Dendritic cell treated with granulocyte-macrophage colony-stimulating factor and Interleukin-4, amounts not matched to agents 40 ng/mL and 50 ng/mL, for 4 days (primary cell): ENCODE measurements at regions of chr9 and their contacts with region 1.

Region 1: DNA sequence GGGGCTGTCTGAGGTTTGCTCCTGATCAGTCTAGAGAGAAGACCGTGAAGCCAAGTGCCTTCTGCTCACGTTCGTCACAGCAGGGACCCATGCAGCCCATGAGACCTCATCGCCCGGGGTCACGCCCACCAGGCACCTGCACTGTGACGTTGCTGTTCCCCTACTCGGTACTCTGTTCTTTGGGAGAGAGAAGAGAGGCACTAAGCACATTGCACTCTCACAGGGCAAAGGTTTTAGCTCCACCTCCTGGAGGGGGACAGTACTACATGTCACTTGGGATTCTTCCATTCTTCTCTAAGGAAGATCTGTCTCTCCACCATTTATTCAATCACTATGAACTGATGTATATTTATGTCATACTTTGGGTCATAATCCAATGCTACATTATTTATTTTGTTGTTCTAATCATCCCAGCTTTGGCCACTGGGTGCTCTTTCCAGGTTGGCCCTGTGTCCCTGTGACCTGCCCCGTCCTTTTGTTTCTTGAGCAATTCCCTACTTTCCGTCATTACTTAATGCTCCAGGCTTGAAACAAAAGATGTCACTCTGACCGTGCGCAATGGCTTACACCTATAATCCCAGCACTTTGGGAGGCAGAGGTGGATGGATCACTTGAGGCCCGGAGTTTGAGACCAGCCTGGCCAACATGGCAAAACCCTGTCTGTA is 31.4 kb upstream of the BRD3 start:
- H3K4me3 Mint-ChIP-seq: no peak overlapping the region
- H3K27ac Mint-ChIP-seq: no peak overlapping the region
- H3K4me1 Mint-ChIP-seq: peaks cover 11% of the 10 kb centered on the region
- H3K27me3 Mint-ChIP-seq: peaks cover 33% of the 10 kb centered on the region

Region 2: DNA sequence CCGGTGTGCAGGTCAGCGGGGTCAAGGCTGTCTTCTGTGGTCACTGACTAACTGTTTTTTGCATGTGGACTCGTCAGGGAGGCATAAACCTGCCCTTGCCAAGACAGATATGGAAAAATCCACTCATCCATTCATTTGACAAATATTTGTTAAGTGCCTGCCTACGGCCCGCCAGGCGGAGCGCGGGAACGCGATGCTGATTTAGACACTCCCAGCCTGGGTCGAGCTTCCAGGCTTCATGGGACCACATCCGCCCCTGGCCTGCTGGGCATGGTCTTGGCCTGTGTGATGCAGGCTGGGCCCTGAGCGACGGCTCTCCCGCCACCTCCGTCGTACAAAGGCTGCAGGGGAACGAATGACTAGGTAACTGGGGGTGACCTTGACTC is 592.6 kb before region 1 on chr9:
- intact Hi-C with region 1: no loop called
- H3K4me3 Mint-ChIP-seq: no peak overlapping the region
- H3K27ac Mint-ChIP-seq: no peak overlapping the region
- H3K4me1 Mint-ChIP-seq: peaks cover 4% of the 10 kb centered on the region
- H3K27me3 Mint-ChIP-seq: peaks cover 26% of the 10 kb centered on the region

Region 3: DNA sequence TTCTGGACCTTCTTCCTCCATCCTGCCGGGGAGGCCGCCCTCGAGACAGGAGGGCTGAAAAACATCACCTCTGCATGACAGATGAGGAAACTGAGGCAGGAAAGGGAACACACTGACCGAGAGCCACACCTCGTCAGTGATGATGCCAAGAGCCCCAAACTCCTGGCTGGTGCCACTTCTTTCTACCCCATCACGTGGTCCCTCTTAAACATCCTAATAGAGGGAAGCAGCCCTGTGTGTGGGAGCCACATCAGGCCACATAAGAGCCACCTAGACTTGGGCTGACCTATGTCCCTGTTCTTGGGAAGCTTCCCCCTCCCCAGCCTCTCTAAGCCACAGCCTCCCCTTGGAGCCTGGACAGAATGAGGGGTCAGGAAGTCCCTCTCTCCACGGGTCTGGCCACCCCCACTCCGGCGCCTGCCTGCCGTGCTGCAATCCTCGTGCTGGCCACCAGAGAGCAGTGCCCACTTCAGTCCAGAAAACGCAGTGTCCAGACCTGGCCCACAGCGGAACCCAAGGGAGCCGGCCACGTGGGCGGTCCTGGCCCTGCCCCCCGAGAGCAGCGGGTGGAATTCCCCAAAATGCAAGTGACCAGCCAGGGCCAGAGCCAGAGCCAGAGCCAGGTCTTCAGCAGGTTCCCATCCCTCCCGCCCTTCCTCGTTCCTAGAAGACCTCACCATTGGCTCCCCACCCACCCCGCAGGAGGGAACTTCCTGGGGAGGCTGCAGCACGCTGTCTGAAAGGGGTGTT is 306.4 kb before region 1 on chr9:
- intact Hi-C with region 1: loop called (anchors 2 kb)
- H3K4me3 Mint-ChIP-seq: peak overlapping the region; percentile 37
- H3K27ac Mint-ChIP-seq: peak overlapping the region; percentile 67
- H3K4me1 Mint-ChIP-seq: peaks cover 39% of the 10 kb centered on the region
- H3K27me3 Mint-ChIP-seq: peaks cover 16% of the 10 kb centered on the region